Posterior vena cava (tissue), 2 donors: ENCODE measurements at regions of chr18 and their contacts with region 1.

Region 1: DNA sequence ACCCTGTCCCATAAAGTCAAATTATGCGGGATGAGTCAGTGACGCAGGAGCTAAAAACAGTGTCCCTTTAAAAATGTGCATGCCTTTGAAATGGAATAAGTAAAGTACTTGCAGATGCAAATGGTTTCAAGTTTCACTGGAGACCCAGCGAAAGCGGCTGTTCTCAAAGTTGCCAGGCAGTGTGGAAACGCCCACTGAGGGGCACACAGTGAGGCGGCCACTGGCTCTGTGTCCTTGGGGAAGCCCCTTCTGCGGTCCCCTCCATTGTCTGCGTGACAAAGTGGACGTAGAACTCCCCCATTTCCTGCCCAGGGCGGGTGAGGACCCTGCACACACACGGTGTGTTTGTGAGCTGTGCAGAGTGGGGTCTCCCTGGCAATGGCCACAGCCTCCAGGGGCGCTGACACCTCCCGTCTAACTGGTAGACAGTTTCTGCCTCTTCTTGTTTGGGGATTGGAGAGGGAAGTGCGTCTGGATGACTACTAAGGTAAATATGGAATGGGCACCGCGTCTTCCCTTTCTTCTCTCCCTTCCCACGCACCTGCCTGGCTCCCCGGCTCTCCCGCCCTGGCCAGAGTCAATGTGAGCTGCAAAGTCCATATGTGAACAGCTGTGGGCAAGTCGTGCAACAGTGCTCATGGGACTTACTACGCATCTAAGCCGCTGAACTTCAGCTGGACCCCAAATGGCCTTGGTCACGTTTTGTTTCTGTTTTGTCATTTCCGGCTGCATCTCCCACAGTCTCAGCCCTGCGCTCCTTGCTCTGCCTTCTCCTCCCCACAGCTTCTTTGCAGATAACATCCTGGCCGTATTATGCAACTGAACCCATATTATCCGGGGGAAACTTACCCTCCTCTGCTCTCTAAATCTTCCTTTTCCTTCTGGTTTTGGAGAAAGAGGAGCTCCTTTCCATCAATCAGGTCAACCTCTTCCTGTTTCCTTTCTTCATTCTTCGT is 33.7 kb upstream of the ZNF516 start:
- DNase-seq: no peak

Region 2: GRCh38 chr18:76169733-76170132 is 359.0 kb before region 1 on chr18:
- intact Hi-C with region 1: no loop called
- DNase-seq: no peak

Region 3: DNA sequence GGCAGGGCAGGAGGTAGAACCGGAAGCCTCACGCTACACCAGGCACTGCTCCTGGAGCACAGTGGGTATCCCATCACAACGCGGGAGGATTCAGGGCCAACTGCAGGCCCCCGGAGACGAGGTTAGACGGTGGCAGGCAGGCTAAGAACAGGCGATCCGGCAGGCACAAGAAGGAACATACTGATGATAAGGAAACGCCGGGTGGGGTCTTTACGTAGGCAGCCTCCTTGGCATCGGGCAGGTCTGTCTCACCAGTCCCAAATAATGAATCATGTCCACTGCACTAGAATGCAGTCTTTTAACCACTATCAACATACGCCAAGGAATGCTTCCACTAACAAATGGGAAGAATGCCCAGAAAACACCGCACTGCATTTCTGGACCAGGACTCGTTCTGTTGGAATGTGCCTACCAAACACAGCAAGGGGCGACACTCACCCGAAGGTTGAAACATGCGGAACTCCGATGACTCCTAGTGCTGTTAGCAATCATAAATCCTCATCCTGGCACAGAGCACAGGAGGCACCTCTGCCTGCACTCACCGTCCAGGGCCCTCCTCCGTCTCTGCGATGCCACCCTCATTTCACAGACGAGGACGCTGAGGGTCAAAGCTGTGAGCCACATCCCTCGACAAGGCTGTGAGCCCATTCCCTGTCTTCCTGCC is 68.9 kb before region 1 on chr18:
- intact Hi-C with region 1: no loop called
- DNase-seq: no peak

Region 4: DNA sequence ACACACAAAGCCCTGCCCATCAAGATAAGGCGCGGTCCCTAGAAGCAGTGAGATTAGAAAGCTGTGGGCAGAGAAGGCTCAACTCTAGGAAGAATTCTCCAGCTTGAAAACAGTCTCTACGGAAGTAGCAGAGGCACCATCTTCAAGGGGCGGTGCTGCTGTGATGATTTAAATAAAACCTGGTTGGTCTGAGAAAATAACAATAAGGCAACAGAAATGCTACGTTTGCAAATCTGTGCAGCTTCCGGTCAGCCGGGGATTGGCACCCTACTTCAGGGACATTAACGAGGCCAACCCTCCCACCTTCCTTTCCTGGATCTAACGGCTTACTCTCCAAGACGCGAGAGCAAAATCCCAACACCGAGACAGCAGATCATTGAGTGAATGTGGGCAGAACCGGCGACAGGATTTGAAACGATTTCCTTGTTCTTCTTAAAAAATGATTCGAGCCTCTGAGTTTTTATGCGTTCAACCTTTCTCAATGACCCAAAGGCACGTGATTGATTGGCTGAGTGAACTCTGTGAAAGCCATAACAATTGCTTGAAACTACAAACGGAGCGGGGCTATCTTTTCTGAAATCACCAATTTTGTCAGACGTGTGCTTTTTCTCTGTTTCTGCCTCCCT is 60.0 kb after region 1 on chr18:
- intact Hi-C with region 1: loop called in 1 of 2 experiments (anchors 10 kb)
- DNase-seq: peak; percentile 81

Region 5: GRCh38 chr18:76672627-76673026 is 143.9 kb after region 1 on chr18:
- intact Hi-C with region 1: loop called in 1 of 2 experiments (anchors 5 kb)
- DNase-seq: no peak